H1 (cell line): ENCODE measurements at regions of chr19 and their contacts with region 1.

Region 1: DNA sequence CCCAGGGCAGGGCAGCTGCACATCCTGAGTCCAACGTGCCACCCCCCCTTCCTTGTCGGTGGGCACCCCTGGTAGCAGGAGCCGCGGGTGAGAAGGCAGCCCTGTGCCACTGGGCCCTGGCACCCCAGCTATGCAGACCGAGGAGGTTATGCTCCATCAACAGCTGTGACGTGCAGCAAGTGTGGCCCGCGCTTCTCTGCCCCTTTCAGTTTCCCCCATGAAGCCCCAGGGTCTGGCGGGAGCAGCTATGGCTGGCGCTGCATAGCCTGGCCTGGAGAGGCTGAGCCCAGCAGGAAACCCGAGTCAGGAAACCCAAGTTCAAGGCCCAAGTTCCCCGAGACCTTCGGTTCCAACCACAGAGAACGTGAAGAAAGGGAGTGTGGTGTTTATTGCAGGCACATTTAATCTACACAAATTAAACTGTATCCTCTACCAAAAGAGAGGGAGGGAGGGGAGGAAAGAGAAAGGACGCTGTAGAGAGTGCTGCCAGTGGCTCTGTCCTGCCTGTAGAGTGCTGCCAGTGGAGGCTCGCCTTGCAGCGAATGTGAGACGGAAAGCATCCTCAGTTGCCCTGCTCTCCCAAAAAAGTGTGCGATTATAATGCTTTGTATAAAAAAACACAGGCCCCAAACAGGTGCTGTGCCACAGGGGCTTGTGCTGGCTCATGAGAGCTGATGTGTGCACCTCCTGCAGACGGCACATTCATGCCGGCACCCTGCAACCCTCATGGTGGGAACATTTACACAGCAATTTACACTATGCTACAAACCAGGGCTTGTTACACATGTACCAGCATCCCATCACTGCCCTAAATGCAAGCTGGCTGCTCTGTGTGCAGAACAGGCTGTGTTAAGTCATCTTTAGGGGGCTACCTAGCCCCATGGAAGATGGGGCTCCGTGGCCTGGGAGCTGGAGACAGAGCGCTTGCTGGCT is 16.3 kb downstream of the POP4 start:
- DNase-seq: no peak
- H3K4me3 ChIP-seq: no peak overlapping the region
- H3K27ac ChIP-seq: no peak overlapping the region
- H3K4me1 ChIP-seq: peaks cover 2 to 8% (median 5%) of the 10 kb centered on the region in 4 experiments; a peak in 6 of 7 replicates
- H3K27me3 ChIP-seq: peaks cover 0 to 2% (median 0%) of the 10 kb centered on the region in 4 experiments; a peak in 2 of 7 replicates
- CTCF ChIP-seq: no peak
- EP300 ChIP-seq: no peak
- POLR2A ChIP-seq: no peak
- RAD21 ChIP-seq: no peak

Region 2: DNA sequence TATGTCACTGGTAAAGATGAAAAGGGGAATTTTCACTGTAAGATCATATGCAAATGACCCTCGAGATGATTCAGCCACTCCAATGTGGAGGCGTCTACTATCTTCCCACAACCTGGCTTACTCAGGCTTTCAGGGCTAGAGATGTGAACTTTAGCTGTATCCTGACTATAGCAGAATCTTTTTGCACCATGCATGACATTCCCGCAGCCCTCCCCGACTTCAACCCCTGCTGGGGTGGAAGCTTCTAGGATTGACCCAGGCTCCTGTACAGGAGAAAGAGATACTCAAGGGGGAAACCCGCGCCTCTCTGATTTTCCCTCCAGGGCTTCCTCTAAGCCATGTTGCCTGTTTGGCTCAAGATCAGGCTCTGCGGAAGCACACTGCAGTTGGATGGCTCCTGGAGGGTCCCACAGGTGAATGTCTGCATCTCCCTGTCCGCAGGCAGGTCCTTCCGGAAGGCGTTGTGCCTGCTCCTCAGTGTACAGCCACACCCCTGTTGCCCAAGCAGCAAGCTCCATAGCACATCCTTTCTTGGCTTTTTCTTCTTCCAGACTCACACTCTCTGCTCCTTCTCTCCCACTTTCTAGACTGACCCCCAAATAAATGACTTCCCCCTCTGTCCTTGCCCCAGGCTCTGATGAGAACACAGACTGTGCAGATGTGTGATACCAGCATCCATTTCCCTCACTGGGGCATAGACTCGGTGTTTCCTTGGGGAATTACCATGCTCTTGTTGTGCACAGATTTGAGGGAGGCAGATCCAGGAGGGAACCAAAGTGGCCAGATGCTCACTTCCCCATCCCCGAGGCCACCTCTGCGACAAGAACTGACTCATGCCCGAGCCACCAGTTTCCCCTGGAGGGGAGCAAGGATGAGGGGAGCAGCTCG is 45.4 kb before region 1 on chr19:
- CTCF ChIA-PET with region 1: no interaction called
- POLR2A ChIA-PET with region 1: no interaction called
- DNase-seq: peak in 1 of 2 experiments; percentile 33
- H3K4me3 ChIP-seq: no peak overlapping the region
- H3K27ac ChIP-seq: no peak overlapping the region
- H3K4me1 ChIP-seq: peaks cover 2 to 6% (median 4%) of the 10 kb centered on the region in 4 experiments; a peak in 4 of 7 replicates
- H3K27me3 ChIP-seq: peaks cover 0 to 3% (median 1%) of the 10 kb centered on the region in 4 experiments; a peak in 3 of 7 replicates
- CTCF ChIP-seq: no peak
- EP300 ChIP-seq: no peak
- POLR2A ChIP-seq: no peak
- RAD21 ChIP-seq: no peak

Region 3: GRCh38 chr19:29671393-29672160 is 49.2 kb after region 1 on chr19:
- CTCF ChIA-PET with region 1: interaction called, 32 read pairs
- POLR2A ChIA-PET with region 1: no interaction called
- DNase-seq: no peak
- H3K4me3 ChIP-seq: no peak overlapping the region
- H3K27ac ChIP-seq: 0 out of 2 replicates have a peak overlapping the region, but pooled peaks have one; percentile 8
- H3K4me1 ChIP-seq: peaks cover 0 to 21% (median 14%) of the 10 kb centered on the region in 4 experiments; a peak in 6 of 7 replicates
- H3K27me3 ChIP-seq: no peaks in the 10 kb centered on the region
- CTCF ChIP-seq: peak; percentile 11 to 28 (median 17); a peak in 2 of 4 replicates
- EP300 ChIP-seq: no peak
- POLR2A ChIP-seq: no peak
- RAD21 ChIP-seq: no peak; a peak in 1 of 4 replicates